Mucosa of descending colon (tissue), 3 donors: ENCODE measurements at regions of chr4 and their contacts with region 1.

Region 1: DNA sequence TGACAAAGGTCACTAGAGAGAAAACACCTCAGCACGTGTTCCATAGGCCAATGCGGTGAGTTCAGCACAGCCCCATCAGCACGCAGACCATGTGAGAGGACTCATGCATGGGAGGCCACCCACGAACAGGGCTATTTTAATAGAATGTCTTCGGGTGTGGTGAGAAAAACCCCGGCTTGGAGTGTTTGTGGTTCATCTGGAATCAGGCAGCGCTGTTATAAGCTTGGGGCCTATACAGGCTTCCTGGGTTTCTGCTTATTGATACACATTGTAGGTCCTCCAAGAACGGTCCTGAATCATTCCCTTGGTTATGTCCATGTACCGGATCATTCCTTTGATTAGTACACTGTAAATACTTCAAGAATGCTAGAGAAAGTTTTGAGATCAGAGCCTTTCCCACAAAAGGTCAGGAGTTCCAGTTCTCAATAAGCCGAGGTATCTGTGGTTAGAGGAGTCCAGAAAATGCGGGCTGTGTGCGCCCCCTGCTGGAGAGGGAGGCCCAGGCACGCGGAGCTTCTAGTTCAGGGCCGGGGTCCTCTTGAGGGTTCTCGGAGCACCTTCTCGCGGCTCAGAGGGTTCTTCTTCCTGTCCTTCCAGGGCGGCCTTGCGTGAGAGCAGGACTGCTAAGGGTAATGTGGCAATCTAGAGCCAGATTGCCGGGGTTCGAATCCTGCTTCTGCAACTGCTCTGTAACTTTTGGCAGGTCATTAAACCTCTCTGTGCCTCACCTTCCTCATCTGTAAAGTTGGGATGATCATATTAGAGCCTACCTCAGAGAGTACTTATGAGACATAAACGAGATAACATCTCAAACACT is 51.8 kb downstream of the TLR10 start:
- DNase-seq: peak; percentile 83 to 93 (median 91)
- ATAC-seq: peak; percentile 67
- H3K4me3 ChIP-seq: no peak overlapping the region
- H3K4me1 ChIP-seq: peaks cover 23% of the 10 kb centered on the region
- CTCF ChIP-seq: peak; percentile 92

Region 2: DNA sequence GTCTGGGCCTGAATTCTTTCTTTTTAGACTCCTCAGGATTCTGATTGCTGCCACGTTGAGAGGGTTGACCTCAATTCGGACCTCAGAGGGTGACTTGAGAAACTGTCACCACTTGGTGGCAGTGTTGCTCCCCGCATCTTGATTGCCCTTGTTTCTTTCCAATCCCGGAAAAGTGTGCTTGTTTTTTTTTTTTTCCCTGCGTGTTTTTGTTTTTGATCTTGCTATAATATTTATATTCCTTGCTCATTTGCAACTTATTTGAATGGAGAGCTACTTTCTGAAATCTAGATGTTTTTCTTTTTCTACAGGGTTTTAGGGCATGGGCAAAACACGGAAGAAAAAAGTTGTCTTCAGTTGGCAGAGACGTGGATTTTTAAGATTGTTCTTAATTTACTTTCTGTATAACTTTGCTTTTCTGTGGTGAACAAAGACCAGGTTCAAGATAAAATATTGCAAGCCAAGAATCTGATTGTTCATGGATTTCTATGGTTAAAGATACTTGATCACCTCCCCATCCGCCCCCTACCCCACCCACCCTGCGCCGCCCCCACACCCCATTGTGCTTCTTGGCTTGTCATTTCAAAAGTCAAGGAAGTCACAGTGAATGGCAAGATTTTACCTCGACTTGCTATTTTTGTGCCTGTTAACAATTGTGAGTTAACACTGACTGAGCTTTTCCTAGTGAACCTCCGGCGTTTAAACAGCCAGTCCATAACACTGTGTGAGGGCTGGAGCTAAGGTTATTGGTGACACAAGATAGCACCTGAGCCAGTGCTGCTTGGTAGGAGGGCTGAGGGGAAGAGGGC is 668.7 kb before region 1 on chr4:
- intact Hi-C with region 1: loop called in 1 of 2 experiments (anchors 10 kb)
- DNase-seq: peak; percentile 60 to 94 (median 85)
- ATAC-seq: peak; percentile 90
- H3K4me3 ChIP-seq: peak overlapping the region; percentile 7
- H3K4me1 ChIP-seq: peaks cover 3% of the 10 kb centered on the region
- CTCF ChIP-seq: peak; percentile 80

Region 3: DNA sequence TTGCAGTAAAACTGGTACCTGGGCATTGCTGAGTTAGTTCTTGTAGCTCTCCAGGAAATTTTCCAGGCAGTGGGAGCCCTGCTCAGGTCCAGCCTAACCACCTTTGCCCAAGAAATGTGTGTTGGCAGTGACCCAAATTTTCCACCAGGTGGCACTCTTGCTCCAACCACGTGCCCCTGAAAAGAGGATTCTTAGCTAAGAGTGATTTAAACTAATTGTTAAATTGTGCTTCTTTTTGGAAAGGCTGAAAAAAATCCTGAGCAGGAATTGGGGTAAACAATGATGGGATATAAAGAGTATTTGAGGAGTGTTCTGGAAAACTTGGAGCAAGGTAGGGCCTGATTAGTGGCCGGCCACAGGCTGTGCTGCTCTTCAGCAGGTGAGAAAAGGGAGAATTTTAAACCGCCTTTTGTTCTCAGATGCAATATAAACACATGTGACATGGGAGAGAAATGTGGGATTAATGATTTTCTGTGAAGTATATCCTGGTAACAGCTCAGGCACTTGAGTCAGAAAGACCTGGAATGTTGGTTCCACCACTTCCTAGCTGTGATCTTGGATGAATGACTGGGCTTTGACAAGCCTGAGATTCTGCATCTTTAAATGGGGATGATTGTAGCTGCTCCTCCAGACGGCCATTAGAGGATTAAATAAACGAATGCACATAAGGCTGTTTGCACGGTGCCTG is 551.2 kb before region 1 on chr4:
- intact Hi-C with region 1: loop called (anchors 2 kb)
- DNase-seq: peak; percentile 69 to 89 (median 85)
- ATAC-seq: peak; percentile 89
- H3K4me3 ChIP-seq: no peak overlapping the region
- H3K4me1 ChIP-seq: peaks cover 16% of the 10 kb centered on the region
- CTCF ChIP-seq: peak; percentile 87

Region 4: GRCh38 chr4:38319456-38320342 is 411.3 kb before region 1 on chr4:
- intact Hi-C with region 1: loop called in 1 of 2 experiments (anchors 5 kb)
- DNase-seq: peak; percentile 94 to 99 (median 99)
- ATAC-seq: peak; percentile 89
- H3K4me3 ChIP-seq: peak overlapping the region; percentile 9
- H3K4me1 ChIP-seq: peaks cover 28% of the 10 kb centered on the region
- CTCF ChIP-seq: peak; percentile 99